HEK293 (cell line): ENCODE measurements at regions of chr10 and their contacts with region 1.

Region 1: GRCh38 chr10:73772280-73773151 is 9.3 kb upstream of the CHCHD1 start:
- H3K4me3 ChIP-seq: peak overlapping the region; percentile 75
- H3K27ac ChIP-seq: peak overlapping the region; percentile 75
- H3K4me1 ChIP-seq: peaks cover 4% of the 10 kb centered on the region; the same call in 1 of the 2 replicates
- CTCF ChIP-seq: peak; percentile 88

Region 2: DNA sequence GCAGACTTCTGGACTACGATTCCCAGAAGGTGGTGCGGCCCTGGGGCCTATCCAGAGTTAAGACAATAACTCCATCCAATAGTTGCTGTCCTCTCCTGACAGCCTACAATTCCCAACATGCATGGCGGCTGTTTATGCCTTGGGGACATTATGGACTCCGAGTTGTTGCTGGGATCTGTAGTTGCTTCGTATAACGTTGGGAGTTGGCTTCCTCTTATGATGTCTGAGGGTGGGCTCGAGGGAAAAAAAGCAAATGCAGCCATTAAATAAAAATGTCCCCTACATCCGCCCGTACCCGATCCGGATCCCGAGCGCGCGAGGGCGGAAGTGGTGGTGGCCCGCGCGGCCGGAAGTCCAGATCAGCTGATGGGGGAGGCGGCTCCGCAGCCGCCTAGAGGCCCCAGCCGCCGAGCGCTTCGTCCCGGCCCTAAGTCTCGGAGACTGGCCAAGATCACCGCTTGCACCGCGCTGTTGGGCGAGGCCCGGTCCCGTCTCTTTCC is 12.8 kb after region 1 on chr10 and contains the start of gene ZSWIM8:
- CTCF ChIA-PET with region 1: interaction called, 3 read pairs
- POLR2A ChIA-PET with region 1: interaction called, 60 read pairs
- H3K4me3 ChIP-seq: peak within 1 kb of the TSS; percentile 93
- H3K27ac ChIP-seq: peak within 1 kb of the TSS; percentile 74
- H3K4me1 ChIP-seq: peaks cover 8% of the 10 kb centered on the region; the same call in 1 of the 2 replicates
- CTCF ChIP-seq: no peak; the same call in 1 of the 2 replicates